OCI-LY7 (cell line): ENCODE measurements at regions of chr2 and their contacts with region 1.

Region 1: DNA sequence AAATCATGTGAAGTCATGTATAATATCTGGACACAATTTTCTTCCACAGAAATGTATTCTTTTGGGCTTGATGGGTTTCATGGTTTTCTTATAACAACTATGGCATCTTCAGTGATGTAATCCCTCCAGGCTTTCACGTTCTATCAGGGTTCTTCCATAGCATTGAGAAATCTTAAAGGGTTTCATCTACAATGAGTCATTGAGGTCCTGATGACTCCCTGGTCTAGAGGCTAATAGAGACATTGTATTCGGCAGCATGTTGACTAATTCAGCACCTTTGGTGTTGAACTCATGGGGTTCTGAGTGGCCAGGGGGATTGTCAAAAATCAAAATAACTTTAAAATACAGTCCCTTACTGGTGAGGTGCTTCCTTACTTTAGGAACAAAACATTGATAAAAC is 614.0 kb upstream of the CRIM1 start:
- DNase-seq: no peak
- H3K4me3 ChIP-seq: no peak overlapping the region
- H3K27ac ChIP-seq: no peak overlapping the region
- H3K4me1 ChIP-seq: no peaks in the 10 kb centered on the region
- CTCF ChIP-seq: no peak

Region 2: GRCh38 chr2:35562488-35562887 is 179.1 kb before region 1 on chr2:
- CTCF ChIA-PET with region 1: no interaction called
- POLR2A ChIA-PET with region 1: no interaction called
- intact Hi-C with region 1: no loop called
- DNase-seq: no peak
- H3K4me3 ChIP-seq: no peak overlapping the region
- H3K27ac ChIP-seq: no peak overlapping the region
- H3K4me1 ChIP-seq: no peaks in the 10 kb centered on the region
- CTCF ChIP-seq: no peak

Region 3: DNA sequence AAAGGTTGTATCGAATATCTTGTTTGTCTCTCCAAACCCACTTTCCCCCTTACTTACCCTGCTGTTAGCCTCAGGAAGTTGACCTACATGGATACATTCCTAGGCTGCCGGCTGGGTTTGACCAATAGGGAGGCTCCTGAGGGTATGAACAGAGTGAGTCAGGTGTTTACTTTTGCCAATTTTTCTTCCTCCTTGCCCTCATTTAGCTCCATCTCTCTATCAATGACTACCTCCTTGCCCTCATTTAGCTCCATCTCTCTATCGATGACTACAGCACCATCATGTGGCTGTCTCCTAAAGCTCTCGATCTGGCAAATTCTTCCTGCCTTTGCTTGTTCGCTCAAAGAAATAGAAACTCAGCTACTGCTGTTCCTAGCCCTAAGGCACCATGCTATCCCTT is 42.2 kb after region 1 on chr2:
- CTCF ChIA-PET with region 1: no interaction called
- POLR2A ChIA-PET with region 1: no interaction called
- intact Hi-C with region 1: loop called (anchors 5 kb)
- DNase-seq: no peak
- H3K4me3 ChIP-seq: no peak overlapping the region
- H3K27ac ChIP-seq: no peak overlapping the region
- H3K4me1 ChIP-seq: no peaks in the 10 kb centered on the region
- CTCF ChIP-seq: no peak

Region 4: GRCh38 chr2:35973132-35973736 is 231.7 kb after region 1 on chr2:
- CTCF ChIA-PET with region 1: no interaction called
- POLR2A ChIA-PET with region 1: no interaction called
- intact Hi-C with region 1: no loop called
- DNase-seq: peak; percentile 22
- H3K4me3 ChIP-seq: no peak overlapping the region
- H3K27ac ChIP-seq: no peak overlapping the region
- H3K4me1 ChIP-seq: no peaks in the 10 kb centered on the region
- CTCF ChIP-seq: peak; percentile 80